WTC11 (cell line): ENCODE measurements at regions of chr16 and their contacts with region 1.

Region 1: DNA sequence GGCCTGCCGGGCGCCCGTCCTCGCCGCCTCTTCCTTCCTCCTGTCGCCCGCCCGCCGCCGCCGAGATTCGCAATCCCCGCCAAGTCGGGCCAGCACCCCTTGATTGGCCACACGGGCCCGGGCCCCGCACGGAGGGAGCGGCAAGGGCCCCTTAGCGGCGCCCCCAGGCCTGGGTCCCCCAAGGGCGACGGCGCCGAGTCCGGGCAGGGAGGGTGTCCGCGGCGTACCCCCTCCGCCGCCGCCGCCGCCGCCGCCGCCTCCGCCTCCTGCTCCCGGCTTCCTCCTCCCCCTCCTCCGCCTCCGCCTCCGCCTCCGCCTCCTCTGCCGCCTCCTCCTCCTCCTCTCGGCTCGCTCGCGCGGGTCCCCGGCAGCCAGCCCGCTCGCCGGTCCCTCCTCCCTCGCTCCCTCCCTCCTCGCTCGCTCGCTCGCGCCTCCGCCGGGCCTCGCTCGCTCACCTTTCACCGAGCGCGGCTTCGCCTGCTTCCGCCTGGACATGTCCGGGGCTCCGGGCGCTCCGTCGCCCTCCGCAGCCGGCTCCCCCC is 561 bp downstream of the ZNF423 start:
- DNase-seq: peak; percentile 88
- ATAC-seq: peak; percentile 35
- H3K4me3 Mint-ChIP-seq: peak overlapping the region; percentile 56
- H3K27ac Mint-ChIP-seq: no peak overlapping the region
- H3K4me1 Mint-ChIP-seq: peaks cover 46% of the 10 kb centered on the region
- H3K27me3 Mint-ChIP-seq: peaks cover 18% of the 10 kb centered on the region
- CTCF ChIP-seq: no peak

Region 2: GRCh38 chr16:49639739-49640431 is 215.5 kb before region 1 on chr16:
- CTCF ChIA-PET with region 1: interaction called, 11 read pairs
- POLR2A ChIA-PET with region 1: no interaction called
- DNase-seq: peak; percentile 51
- ATAC-seq: peak; percentile 68
- H3K4me3 Mint-ChIP-seq: peak overlapping the region; percentile 0; the same call in 1 of the 2 replicates
- H3K27ac Mint-ChIP-seq: peak overlapping the region; percentile 92
- H3K4me1 Mint-ChIP-seq: peaks cover 52% of the 10 kb centered on the region
- H3K27me3 Mint-ChIP-seq: no peaks in the 10 kb centered on the region
- CTCF ChIP-seq: no peak

Region 3: GRCh38 chr16:49674351-49674851 is 180.9 kb before region 1 on chr16:
- CTCF ChIA-PET with region 1: no interaction called
- POLR2A ChIA-PET with region 1: no interaction called
- DNase-seq: no peak
- ATAC-seq: no peak
- H3K4me3 Mint-ChIP-seq: no peak overlapping the region
- H3K27ac Mint-ChIP-seq: peak overlapping the region; percentile 69; the same call in 1 of the 2 replicates
- H3K4me1 Mint-ChIP-seq: peaks cover 4% of the 10 kb centered on the region; the same call in 1 of the 2 replicates
- H3K27me3 Mint-ChIP-seq: no peaks in the 10 kb centered on the region
- CTCF ChIP-seq: no peak

Region 4: GRCh38 chr16:49776085-49776595 is 79.2 kb before region 1 on chr16:
- CTCF ChIA-PET with region 1: interaction called, 14 read pairs
- POLR2A ChIA-PET with region 1: no interaction called
- DNase-seq: peak; percentile 76
- ATAC-seq: peak; percentile 90
- H3K4me3 Mint-ChIP-seq: peak overlapping the region; percentile 11; the same call in 1 of the 2 replicates
- H3K27ac Mint-ChIP-seq: peak overlapping the region; percentile 97
- H3K4me1 Mint-ChIP-seq: peaks cover 52% of the 10 kb centered on the region
- H3K27me3 Mint-ChIP-seq: no peaks in the 10 kb centered on the region
- CTCF ChIP-seq: no peak

Region 5: GRCh38 chr16:49866595-49867071 is 11.3 kb after region 1 on chr16:
- CTCF ChIA-PET with region 1: interaction called, 199 read pairs
- POLR2A ChIA-PET with region 1: interaction called, 3 read pairs
- DNase-seq: peak; percentile 58
- ATAC-seq: peak; percentile 93
- H3K4me3 Mint-ChIP-seq: no peak overlapping the region
- H3K27ac Mint-ChIP-seq: no peak overlapping the region
- H3K4me1 Mint-ChIP-seq: peaks cover 17% of the 10 kb centered on the region
- H3K27me3 Mint-ChIP-seq: peaks cover 7% of the 10 kb centered on the region
- CTCF ChIP-seq: no peak

Region 6: DNA sequence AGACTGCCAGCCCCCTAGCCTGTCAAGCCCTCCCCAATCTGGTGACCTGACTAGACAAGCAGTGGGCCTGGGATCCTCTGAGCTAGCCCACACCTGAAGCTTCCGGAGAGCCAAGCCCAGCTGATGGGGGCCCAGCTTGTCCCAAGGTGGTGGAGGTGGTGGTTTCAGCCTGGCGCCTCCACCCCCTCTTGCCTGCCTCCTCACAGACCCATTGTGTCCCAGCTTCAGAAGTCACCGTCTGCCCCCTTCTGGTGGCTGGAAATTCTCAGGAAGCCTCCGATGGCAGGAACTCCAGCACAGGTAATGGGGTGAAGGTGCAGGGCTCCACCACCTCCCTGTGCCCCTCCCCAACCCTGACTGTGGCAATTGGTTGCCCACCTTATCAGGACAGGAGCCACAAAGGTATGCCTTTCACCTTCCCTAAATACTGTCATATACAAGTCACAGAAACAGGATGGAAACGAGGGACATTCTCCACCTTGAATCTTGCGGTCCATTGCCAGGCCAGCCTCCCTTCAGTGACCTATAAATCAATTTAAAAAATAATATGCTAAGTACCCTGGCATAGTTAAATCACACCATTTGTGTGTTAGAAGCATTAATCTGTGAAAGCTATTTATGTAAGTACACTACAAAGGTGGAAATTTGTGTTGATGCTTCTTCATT is 66.6 kb after region 1 on chr16:
- CTCF ChIA-PET with region 1: interaction called, 58 read pairs
- POLR2A ChIA-PET with region 1: interaction called, 4 read pairs
- DNase-seq: peak; percentile 87
- ATAC-seq: peak; percentile 92
- H3K4me3 Mint-ChIP-seq: no peak overlapping the region
- H3K27ac Mint-ChIP-seq: no peak overlapping the region
- H3K4me1 Mint-ChIP-seq: peaks cover 3% of the 10 kb centered on the region
- H3K27me3 Mint-ChIP-seq: no peaks in the 10 kb centered on the region
- CTCF ChIP-seq: peak; percentile 55; the same call in 1 of the 2 replicates

Region 7: GRCh38 chr16:49980166-49980565 is 124.8 kb after region 1 on chr16:
- CTCF ChIA-PET with region 1: no interaction called
- POLR2A ChIA-PET with region 1: no interaction called
- DNase-seq: no peak
- ATAC-seq: no peak
- H3K4me3 Mint-ChIP-seq: no peak overlapping the region
- H3K27ac Mint-ChIP-seq: no peak overlapping the region
- H3K4me1 Mint-ChIP-seq: no peaks in the 10 kb centered on the region
- H3K27me3 Mint-ChIP-seq: no peaks in the 10 kb centered on the region; the same call in 1 of the 2 replicates
- CTCF ChIP-seq: no peak

Region 8: GRCh38 chr16:50067290-50067853 is 212.0 kb after region 1 on chr16:
- CTCF ChIA-PET with region 1: no interaction called
- POLR2A ChIA-PET with region 1: no interaction called
- DNase-seq: no peak
- ATAC-seq: peak; percentile 39
- H3K4me3 Mint-ChIP-seq: peak overlapping the region; percentile 78
- H3K27ac Mint-ChIP-seq: peak overlapping the region; percentile 38
- H3K4me1 Mint-ChIP-seq: peaks cover 17% of the 10 kb centered on the region
- H3K27me3 Mint-ChIP-seq: no peaks in the 10 kb centered on the region; the same call in 1 of the 2 replicates
- CTCF ChIP-seq: no peak